ENCODE measurements at regions of chr1 and their contacts with region 1.

Region 1: GRCh38 chr1:167533851-167534300 is 15.5 kb upstream of the CD247 start:
- DNase-seq: peak; percentile 55 to 65 (median 60)
- H3K4me3 ChIP-seq: no peak overlapping the region
- H3K4me3 Mint-ChIP-seq: no peak overlapping the region
- H3K27ac ChIP-seq: no peak overlapping the region
- H3K27ac Mint-ChIP-seq: no peak overlapping the region
- H3K4me1 ChIP-seq: no peaks in the 10 kb centered on the region
- H3K4me1 Mint-ChIP-seq: peaks cover 3 to 4% (median 3%) of the 10 kb centered on the region in 4 donors
- H3K27me3 ChIP-seq: no peaks in the 10 kb centered on the region
- H3K27me3 Mint-ChIP-seq: no peaks in the 10 kb centered on the region

Region 2: GRCh38 chr1:167059045-167059808 is 474.6 kb before region 1 on chr1:
- CTCF ChIA-PET with region 1: interaction called, 10 read pairs
- POLR2A ChIA-PET with region 1: no interaction called
- intact Hi-C with region 1: no loop called
- DNase-seq: peak; percentile 47 to 67 (median 58)
- H3K4me3 ChIP-seq: no peak overlapping the region
- H3K4me3 Mint-ChIP-seq: peak overlapping the region in 1 of 8 donors; percentile 41
- H3K27ac ChIP-seq: no peak overlapping the region
- H3K27ac Mint-ChIP-seq: peak overlapping the region in 4 of 7 donors; percentile 13 to 88 (median 20)
- H3K4me1 ChIP-seq: peaks cover 7% of the 10 kb centered on the region
- H3K4me1 Mint-ChIP-seq: peaks cover 3 to 10% (median 6%) of the 10 kb centered on the region in 4 donors
- H3K27me3 ChIP-seq: no peaks in the 10 kb centered on the region
- H3K27me3 Mint-ChIP-seq: no peaks in the 10 kb centered on the region

Region 3: GRCh38 chr1:167270349-167271092 is 263.4 kb before region 1 on chr1:
- CTCF ChIA-PET with region 1: interaction called, 134 read pairs
- POLR2A ChIA-PET with region 1: no interaction called
- intact Hi-C with region 1: loop called (anchors 1 kb)
- DNase-seq: no peak
- H3K4me3 ChIP-seq: no peak overlapping the region
- H3K4me3 Mint-ChIP-seq: no peak overlapping the region
- H3K27ac ChIP-seq: no peak overlapping the region
- H3K27ac Mint-ChIP-seq: peak overlapping the region in 1 of 7 donors; percentile 7
- H3K4me1 ChIP-seq: peaks cover 5% of the 10 kb centered on the region
- H3K4me1 Mint-ChIP-seq: peaks cover 10 to 33% (median 13%) of the 10 kb centered on the region in 4 donors
- H3K27me3 ChIP-seq: no peaks in the 10 kb centered on the region
- H3K27me3 Mint-ChIP-seq: no peaks in the 10 kb centered on the region

Region 4: DNA sequence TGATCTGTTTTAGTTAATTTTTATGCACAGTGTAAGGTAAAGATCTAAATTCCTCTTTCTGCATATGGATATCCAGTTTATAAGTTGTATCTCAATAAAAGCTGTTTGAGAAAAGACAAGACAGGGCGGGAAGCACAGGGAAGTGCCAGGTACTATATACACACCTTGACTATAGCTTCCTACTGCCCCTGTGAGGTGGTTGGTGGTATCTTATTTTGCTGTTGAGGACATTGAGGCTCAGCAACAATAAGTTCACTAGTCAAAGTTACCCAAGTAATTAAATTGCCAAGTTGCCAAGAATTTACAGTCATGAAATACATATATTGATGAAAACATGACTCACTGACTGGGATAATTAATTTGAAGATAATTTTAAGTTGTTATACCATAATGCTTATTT is 124.7 kb before region 1 on chr1:
- CTCF ChIA-PET with region 1: interaction called, 86 read pairs
- POLR2A ChIA-PET with region 1: no interaction called
- intact Hi-C with region 1: no loop called
- DNase-seq: no peak
- H3K4me3 ChIP-seq: no peak overlapping the region
- H3K4me3 Mint-ChIP-seq: no peak overlapping the region
- H3K27ac ChIP-seq: no peak overlapping the region
- H3K27ac Mint-ChIP-seq: peak overlapping the region in 2 of 7 donors; percentile 0 to 70
- H3K4me1 ChIP-seq: no peaks in the 10 kb centered on the region
- H3K4me1 Mint-ChIP-seq: peaks cover 0 to 6% (median 5%) of the 10 kb centered on the region in 4 donors
- H3K27me3 ChIP-seq: no peaks in the 10 kb centered on the region
- H3K27me3 Mint-ChIP-seq: no peaks in the 10 kb centered on the region

Region 5: GRCh38 chr1:167442124-167442848 is 91.6 kb before region 1 on chr1:
- CTCF ChIA-PET with region 1: interaction called, 64 read pairs
- POLR2A ChIA-PET with region 1: interaction called, 5 read pairs
- intact Hi-C with region 1: loop called (anchors 1 kb)
- DNase-seq: peak; percentile 82 to 89 (median 85)
- H3K4me3 ChIP-seq: no peak overlapping the region
- H3K4me3 Mint-ChIP-seq: peak overlapping the region in 5 of 8 donors; percentile 26 to 61 (median 54)
- H3K27ac ChIP-seq: peak overlapping the region; percentile 17
- H3K27ac Mint-ChIP-seq: peak overlapping the region; percentile 75 to 94 (median 88)
- H3K4me1 ChIP-seq: peaks cover 82% of the 10 kb centered on the region
- H3K4me1 Mint-ChIP-seq: peaks cover 61 to 94% (median 76%) of the 10 kb centered on the region in 4 donors
- H3K27me3 ChIP-seq: no peaks in the 10 kb centered on the region
- H3K27me3 Mint-ChIP-seq: no peaks in the 10 kb centered on the region

Region 6: GRCh38 chr1:167454894-167455785 is 78.7 kb before region 1 on chr1:
- CTCF ChIA-PET with region 1: interaction called, 20 read pairs
- POLR2A ChIA-PET with region 1: no interaction called
- intact Hi-C with region 1: no loop called
- DNase-seq: peak; percentile 81 to 92 (median 84)
- H3K4me3 ChIP-seq: peak overlapping the region; percentile 29 to 85
- H3K4me3 Mint-ChIP-seq: peak overlapping the region; percentile 70 to 88 (median 86)
- H3K27ac ChIP-seq: peak overlapping the region; percentile 88
- H3K27ac Mint-ChIP-seq: peak overlapping the region; percentile 51 to 98 (median 91)
- H3K4me1 ChIP-seq: peaks cover 83% of the 10 kb centered on the region
- H3K4me1 Mint-ChIP-seq: peaks cover 58 to 82% (median 63%) of the 10 kb centered on the region in 4 donors
- H3K27me3 ChIP-seq: no peaks in the 10 kb centered on the region
- H3K27me3 Mint-ChIP-seq: no peaks in the 10 kb centered on the region

Region 7: GRCh38 chr1:167553136-167554027 is 19.5 kb after region 1 on chr1 and contains the start of gene CREG1:
- CTCF ChIA-PET with region 1: interaction called, 10 read pairs
- POLR2A ChIA-PET with region 1: interaction called, 3 read pairs
- intact Hi-C with region 1: no loop called
- DNase-seq: peak; percentile 85 to 93 (median 87)
- H3K4me3 ChIP-seq: peak within 1 kb of the TSS; percentile 74 to 77
- H3K4me3 Mint-ChIP-seq: peak within 1 kb of the TSS; percentile 87 to 94 (median 90)
- H3K27ac ChIP-seq: peak within 1 kb of the TSS; percentile 41
- H3K27ac Mint-ChIP-seq: peak within 1 kb of the TSS; percentile 36 to 89 (median 84)
- H3K4me1 ChIP-seq: peaks cover 30% of the 10 kb centered on the region
- H3K4me1 Mint-ChIP-seq: peaks cover 23 to 56% (median 39%) of the 10 kb centered on the region in 4 donors
- H3K27me3 ChIP-seq: no peaks in the 10 kb centered on the region
- H3K27me3 Mint-ChIP-seq: peaks cover 0 to 3% of the 10 kb centered on the region in 2 donors
- total RNA-seq, gene CREG1: 21.0 to 21.7 TPM

Region 8: DNA sequence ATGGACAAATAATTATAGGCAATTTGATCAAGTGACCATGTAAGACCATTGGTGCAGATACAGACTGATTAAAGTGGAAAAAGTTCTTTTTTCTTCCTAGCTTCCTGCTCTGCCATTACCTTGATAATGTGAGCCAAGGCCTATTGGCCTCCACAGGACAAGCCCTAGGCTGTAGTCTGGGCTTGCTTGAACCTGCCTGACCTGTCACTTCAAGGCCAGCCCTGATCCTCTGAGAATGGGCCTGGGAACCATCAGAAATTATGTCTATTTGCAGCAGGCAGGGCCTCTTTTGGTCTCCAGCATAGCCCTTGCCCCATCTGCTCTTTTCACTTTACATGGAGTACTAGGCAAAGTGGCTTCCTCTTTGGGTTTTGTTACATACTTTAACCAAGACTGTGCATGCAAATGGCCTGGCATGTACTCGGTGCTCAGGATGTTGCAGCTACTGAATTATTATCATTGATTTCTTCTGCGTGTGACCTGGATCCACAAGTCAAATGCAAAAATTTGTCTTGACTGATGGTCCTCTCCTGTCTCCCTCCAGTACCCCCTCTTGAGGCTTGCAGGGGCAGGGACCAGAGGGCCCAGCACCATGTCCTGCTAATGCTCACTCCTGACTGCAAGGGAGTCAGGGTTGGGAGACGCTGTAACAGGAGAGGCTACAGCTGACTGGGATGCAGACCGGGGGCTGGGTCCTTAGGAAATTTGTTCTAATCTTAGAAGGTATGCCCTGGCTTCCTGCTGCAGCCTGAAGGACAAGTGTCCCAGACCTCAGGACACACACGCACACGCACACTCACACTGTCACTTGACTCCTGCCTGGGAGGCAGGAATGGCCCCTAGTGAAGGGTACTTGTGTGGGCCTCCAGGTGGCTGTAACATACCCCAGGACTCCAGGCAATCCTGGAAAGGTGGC is 135.6 kb after region 1 on chr1:
- CTCF ChIA-PET with region 1: no interaction called
- POLR2A ChIA-PET with region 1: no interaction called
- intact Hi-C with region 1: no loop called
- DNase-seq: no peak
- H3K4me3 ChIP-seq: no peak overlapping the region
- H3K4me3 Mint-ChIP-seq: peak overlapping the region in 2 of 8 donors; percentile 34 to 60
- H3K27ac ChIP-seq: peak overlapping the region; percentile 9
- H3K27ac Mint-ChIP-seq: peak overlapping the region in 5 of 7 donors; percentile 78 to 92 (median 83)
- H3K4me1 ChIP-seq: peaks cover 93% of the 10 kb centered on the region
- H3K4me1 Mint-ChIP-seq: peaks cover 76 to 99% (median 85%) of the 10 kb centered on the region in 4 donors
- H3K27me3 ChIP-seq: no peaks in the 10 kb centered on the region
- H3K27me3 Mint-ChIP-seq: no peaks in the 10 kb centered on the region

Measured in CD4-positive, alpha-beta memory T cell (primary cell).